ENCODE measurements at regions of chr13 and their contacts with region 1.

Region 1: GRCh38 chr13:34086281-34086680 is 268.3 kb downstream of the RFC3 start:
- DNase-seq: no peak
- H3K4me3 ChIP-seq: no peak overlapping the region
- H3K27ac ChIP-seq: no peak overlapping the region
- H3K4me1 ChIP-seq: no peaks in the 10 kb centered on the region
- H3K27me3 ChIP-seq: no peaks in the 10 kb centered on the region
- CTCF ChIP-seq: no peak

Region 2: GRCh38 chr13:32415019-32415418 is 1671.3 kb before region 1 on chr13:
- CTCF ChIA-PET with region 1: interaction called, 10 read pairs
- POLR2A ChIA-PET with region 1: no interaction called
- intact Hi-C with region 1: no loop called
- DNase-seq: peak; percentile 41
- H3K4me3 ChIP-seq: no peak overlapping the region
- H3K27ac ChIP-seq: no peak overlapping the region
- H3K4me1 ChIP-seq: no peaks in the 10 kb centered on the region
- H3K27me3 ChIP-seq: no peaks in the 10 kb centered on the region
- CTCF ChIP-seq: peak; percentile 63

Measured in A673 (cell line).